Pancreas (tissue), 10 donors: ENCODE measurements at regions of chr15 and their contacts with region 1.

Region 1: GRCh38 chr15:40344631-40345120 is 3.9 kb upstream of the CCDC9B start:
- DNase-seq: peak in 5 of 6 donors; percentile 58 to 74 (median 65)
- ATAC-seq: peak in 3 of 4 donors; percentile 52 to 60 (median 54)
- H3K4me3 ChIP-seq: no peak overlapping the region
- H3K27ac ChIP-seq: no peak overlapping the region
- H3K4me1 ChIP-seq: peaks cover 0 to 6% (median 4%) of the 10 kb centered on the region in 3 donors
- H3K27me3 ChIP-seq: no peaks in the 10 kb centered on the region
- CTCF ChIP-seq: peak; percentile 46 to 87 (median 72)

Region 2: DNA sequence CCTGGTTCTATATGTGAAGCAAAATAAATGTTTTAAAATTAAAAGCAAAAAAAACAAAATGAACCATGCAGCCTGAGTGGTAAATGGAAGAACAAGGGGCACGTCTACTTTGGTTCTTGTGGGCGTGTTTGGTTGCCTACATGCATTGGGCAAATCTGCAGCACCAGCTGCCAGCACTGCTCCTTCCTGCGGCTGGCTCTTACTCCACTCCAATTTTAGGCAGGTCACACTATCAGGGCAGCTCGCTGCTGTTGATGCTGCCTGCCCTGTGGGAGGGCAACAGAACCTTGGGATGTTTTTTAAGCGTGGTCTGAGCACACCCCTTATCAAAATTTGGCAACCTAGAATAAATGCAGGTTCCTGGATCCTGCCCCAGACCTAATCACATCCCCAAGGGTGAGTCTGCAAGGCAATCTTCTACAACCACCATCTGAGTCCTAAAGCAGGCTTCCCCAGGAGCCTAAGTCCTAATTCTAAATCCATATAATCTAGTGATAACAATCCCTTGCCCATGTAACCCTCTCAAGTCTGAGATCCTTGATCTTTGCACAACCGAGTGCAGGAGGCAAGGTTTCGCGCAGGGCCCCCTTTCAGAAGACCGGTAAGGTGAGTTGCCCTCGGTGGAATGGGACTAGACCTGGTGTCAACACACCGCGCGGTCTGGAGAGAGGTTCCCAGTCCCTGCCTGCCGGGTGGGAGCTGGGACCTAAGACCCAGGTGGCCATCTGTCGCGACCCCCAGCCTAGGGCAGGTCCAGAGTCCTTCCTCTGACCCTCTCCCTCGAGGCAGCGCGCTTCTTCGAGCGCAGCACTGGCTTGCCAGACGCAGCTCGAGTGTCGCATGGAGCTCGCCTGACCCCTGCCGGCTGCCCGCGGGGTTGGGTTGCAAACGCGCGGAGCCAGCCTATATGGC is 76.8 kb after region 1 on chr15:
- intact Hi-C with region 1: loop called in 2 of 3 experiments (anchors 5 to 10 kb)
- DNase-seq: peak; percentile 68 to 94 (median 82)
- ATAC-seq: peak; percentile 83 to 93 (median 86)
- H3K4me3 ChIP-seq: peak overlapping the region in 1 of 4 donors; percentile 3
- H3K27ac ChIP-seq: peak overlapping the region in 3 of 4 donors; percentile 59 to 84 (median 81)
- H3K4me1 ChIP-seq: peaks cover 21 to 22% (median 22%) of the 10 kb centered on the region in 3 donors
- H3K27me3 ChIP-seq: no peaks in the 10 kb centered on the region
- CTCF ChIP-seq: peak; percentile 88 to 91 (median 88)